Heart left ventricle (tissue), 16 donors: ENCODE measurements at regions of chr14 and their contacts with region 1.

Region 1: GRCh38 chr14:32366256-32366879 is 37.3 kb downstream of the AKAP6 start:
- DNase-seq: peak in 1 of 5 donors; percentile 28
- ATAC-seq: peak; percentile 48 to 81 (median 64)
- H3K4me3 ChIP-seq: no peak overlapping the region
- H3K27ac ChIP-seq: peak overlapping the region in 3 of 12 donors; percentile 15 to 30 (median 27)
- H3K4me1 ChIP-seq: peaks cover 0 to 33% (median 15%) of the 10 kb centered on the region in 12 donors
- H3K27me3 ChIP-seq: no peaks in the 10 kb centered on the region
- CTCF ChIP-seq: peak in 3 of 12 donors; percentile 16 to 32 (median 20)
- POLR2A ChIP-seq: no peak

Region 2: DNA sequence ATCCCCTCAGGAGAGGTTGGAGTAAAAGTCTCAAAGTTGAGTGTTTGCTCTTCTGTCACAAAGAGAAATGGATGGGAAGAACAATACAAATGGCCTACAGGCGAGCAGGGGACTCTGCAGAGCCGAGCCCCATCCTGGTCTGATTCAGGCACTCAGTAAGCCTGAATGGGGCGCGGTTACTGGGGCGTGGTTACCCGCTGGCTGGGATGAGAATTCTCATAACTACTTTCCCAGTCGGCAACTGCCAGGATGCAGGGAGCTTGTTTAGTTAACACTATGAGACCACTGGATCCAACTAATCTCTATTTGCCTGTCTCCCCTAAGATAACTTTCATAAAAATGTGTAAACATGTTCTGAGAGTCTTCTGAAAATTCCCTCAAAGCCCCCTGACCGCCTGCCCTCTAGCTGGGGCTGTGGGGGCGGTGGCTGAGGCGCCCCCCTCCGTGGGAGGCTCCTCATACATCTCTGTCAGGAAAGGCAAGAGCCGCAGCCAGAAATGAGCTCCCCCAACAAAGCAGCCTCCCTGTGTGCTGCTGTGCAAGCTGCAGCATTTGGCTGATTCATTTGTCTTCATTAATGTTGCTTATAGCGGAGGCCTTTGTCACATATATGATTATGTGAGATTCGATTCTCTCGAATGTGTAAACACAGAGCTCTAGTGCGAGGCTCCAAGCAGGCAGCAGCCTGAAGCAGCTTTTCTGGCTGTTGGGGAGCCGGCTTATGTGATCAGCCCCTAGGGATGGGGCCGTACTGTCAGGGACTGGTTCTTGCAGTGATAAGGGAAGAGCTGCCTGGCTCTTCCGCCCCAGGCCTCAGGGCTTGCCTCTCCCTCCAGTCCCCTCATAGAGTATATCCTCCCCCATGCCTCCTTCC is 415.4 kb before region 1 on chr14:
- intact Hi-C with region 1: loop called in 1 of 10 experiments (anchors 10 kb)
- DNase-seq: peak; percentile 66 to 76 (median 72)
- ATAC-seq: peak in 3 of 4 donors; percentile 68 to 92 (median 86)
- H3K4me3 ChIP-seq: peak overlapping the region in 2 of 12 donors; percentile 15 to 24
- H3K27ac ChIP-seq: peak overlapping the region in 9 of 12 donors; percentile 0 to 75 (median 66)
- H3K4me1 ChIP-seq: peaks cover 0 to 27% (median 14%) of the 10 kb centered on the region in 12 donors
- H3K27me3 ChIP-seq: no peaks in the 10 kb centered on the region
- CTCF ChIP-seq: no peak
- POLR2A ChIP-seq: no peak